ENCODE measurements at regions of chr6 and their contacts with region 1.

Region 1: DNA sequence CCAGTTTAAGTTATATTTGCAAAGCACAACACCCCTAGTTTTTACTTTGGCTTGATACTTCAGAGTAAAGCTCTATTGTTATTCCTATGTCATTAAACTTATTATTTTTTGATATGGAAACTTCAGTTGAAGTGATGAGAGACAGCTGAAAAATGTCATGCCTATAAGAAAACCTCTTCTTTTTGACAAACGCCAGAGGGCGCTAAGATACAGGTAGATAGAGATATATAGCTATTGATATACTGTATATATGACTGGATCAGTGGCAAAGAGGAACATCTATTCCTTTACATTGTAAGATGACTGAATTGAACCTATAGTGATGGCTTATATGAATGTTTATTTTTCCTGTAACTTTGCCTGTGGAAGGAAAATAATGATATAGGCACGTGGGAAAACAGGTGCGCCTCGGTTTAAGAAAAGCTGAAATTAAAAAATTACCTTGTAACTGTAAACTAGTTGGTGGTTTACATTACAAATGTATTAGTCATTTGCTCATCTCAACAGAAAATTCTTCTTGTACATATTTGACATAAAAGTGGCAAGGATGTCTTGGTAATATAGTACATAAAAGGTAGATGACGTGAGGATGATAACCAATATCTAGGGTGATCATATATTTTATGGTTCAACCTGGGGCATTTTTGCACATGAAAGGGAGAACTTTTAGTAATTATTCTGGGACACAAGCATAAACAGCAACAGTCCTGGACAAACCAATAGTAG is 74.1 kb downstream of the LAMA4 start:
- DNase-seq: peak; percentile 71
- H3K4me3 ChIP-seq: no peak overlapping the region
- H3K27ac ChIP-seq: no peak overlapping the region
- H3K4me1 ChIP-seq: peaks cover 11% of the 10 kb centered on the region
- H3K27me3 ChIP-seq: no peaks in the 10 kb centered on the region
- CTCF ChIP-seq: peak; percentile 28 to 46
- POLR2A ChIP-seq: no peak

Region 2: GRCh38 chr6:111552241-111552744 is 628.0 kb before region 1 on chr6:
- CTCF ChIA-PET with region 1: no interaction called
- POLR2A ChIA-PET with region 1: no interaction called
- dilution Hi-C with region 1: no loop called
- intact Hi-C with region 1: no loop called
- DNase-seq: peak; percentile 89
- H3K4me3 ChIP-seq: no peak overlapping the region
- H3K27ac ChIP-seq: peak overlapping the region; percentile 30
- H3K4me1 ChIP-seq: peaks cover 20% of the 10 kb centered on the region
- H3K27me3 ChIP-seq: no peaks in the 10 kb centered on the region
- CTCF ChIP-seq: no peak
- POLR2A ChIP-seq: no peak

Region 3: DNA sequence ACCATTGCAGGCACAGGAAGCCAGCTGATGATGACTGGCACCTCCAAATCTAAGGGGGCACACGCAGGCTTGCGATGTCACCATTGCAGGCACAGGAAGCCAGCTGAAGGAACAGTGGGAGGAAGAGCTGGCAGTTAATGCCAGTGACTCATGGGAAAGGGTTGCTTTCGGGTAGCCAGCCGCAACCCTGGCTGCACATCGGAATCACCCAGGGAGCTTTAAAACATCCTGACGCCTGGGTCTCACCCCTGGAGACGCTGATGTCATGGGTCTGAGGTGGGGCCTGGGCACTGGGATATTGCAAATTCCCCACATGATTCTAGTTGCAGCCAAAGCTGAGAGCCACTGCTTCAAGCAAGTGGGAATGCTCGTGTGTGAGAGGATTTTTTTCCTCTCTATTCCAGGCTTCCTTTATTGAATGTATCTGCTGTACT is 142.5 kb before region 1 on chr6:
- CTCF ChIA-PET with region 1: no interaction called
- POLR2A ChIA-PET with region 1: no interaction called
- dilution Hi-C with region 1: no loop called
- intact Hi-C with region 1: no loop called
- DNase-seq: peak; percentile 91
- H3K4me3 ChIP-seq: no peak overlapping the region
- H3K27ac ChIP-seq: peak overlapping the region; percentile 87
- H3K4me1 ChIP-seq: peaks cover 46% of the 10 kb centered on the region
- H3K27me3 ChIP-seq: no peaks in the 10 kb centered on the region
- CTCF ChIP-seq: no peak
- POLR2A ChIP-seq: no peak

Region 4: GRCh38 chr6:112203577-112204349 is 23.5 kb after region 1 on chr6:
- CTCF ChIA-PET with region 1: interaction called, 12 read pairs
- POLR2A ChIA-PET with region 1: no interaction called
- dilution Hi-C with region 1: no loop called
- intact Hi-C with region 1: no loop called
- DNase-seq: peak; percentile 94
- H3K4me3 ChIP-seq: no peak overlapping the region
- H3K27ac ChIP-seq: peak overlapping the region; percentile 87
- H3K4me1 ChIP-seq: peaks cover 77% of the 10 kb centered on the region
- H3K27me3 ChIP-seq: no peaks in the 10 kb centered on the region
- CTCF ChIP-seq: no peak
- POLR2A ChIP-seq: no peak

Region 5: DNA sequence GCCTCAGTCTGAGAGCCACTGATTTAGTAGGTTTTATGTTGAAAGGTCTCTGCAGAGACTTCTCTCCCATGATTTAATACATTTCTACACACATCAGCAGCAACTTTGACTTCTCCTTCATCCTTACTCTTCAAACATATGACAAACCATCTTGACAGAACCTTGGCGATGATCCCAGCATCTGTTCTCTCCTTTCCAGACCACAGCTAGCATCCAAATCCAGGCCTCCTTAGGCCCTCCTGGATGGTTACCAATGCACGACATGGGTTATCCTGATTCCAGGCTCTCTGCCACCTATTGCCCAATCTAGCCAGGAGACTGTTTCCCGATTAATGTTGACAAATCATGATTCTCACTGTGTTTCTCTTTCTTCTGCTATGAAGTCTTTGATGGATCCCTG is 57.3 kb after region 1 on chr6:
- CTCF ChIA-PET with region 1: interaction called, 36 read pairs
- POLR2A ChIA-PET with region 1: no interaction called
- dilution Hi-C with region 1: no loop called
- intact Hi-C with region 1: no loop called
- DNase-seq: peak; percentile 53
- H3K4me3 ChIP-seq: no peak overlapping the region
- H3K27ac ChIP-seq: peak overlapping the region; percentile 99
- H3K4me1 ChIP-seq: peaks cover 86% of the 10 kb centered on the region
- H3K27me3 ChIP-seq: no peaks in the 10 kb centered on the region
- CTCF ChIP-seq: no peak
- POLR2A ChIP-seq: no peak

Region 6: DNA sequence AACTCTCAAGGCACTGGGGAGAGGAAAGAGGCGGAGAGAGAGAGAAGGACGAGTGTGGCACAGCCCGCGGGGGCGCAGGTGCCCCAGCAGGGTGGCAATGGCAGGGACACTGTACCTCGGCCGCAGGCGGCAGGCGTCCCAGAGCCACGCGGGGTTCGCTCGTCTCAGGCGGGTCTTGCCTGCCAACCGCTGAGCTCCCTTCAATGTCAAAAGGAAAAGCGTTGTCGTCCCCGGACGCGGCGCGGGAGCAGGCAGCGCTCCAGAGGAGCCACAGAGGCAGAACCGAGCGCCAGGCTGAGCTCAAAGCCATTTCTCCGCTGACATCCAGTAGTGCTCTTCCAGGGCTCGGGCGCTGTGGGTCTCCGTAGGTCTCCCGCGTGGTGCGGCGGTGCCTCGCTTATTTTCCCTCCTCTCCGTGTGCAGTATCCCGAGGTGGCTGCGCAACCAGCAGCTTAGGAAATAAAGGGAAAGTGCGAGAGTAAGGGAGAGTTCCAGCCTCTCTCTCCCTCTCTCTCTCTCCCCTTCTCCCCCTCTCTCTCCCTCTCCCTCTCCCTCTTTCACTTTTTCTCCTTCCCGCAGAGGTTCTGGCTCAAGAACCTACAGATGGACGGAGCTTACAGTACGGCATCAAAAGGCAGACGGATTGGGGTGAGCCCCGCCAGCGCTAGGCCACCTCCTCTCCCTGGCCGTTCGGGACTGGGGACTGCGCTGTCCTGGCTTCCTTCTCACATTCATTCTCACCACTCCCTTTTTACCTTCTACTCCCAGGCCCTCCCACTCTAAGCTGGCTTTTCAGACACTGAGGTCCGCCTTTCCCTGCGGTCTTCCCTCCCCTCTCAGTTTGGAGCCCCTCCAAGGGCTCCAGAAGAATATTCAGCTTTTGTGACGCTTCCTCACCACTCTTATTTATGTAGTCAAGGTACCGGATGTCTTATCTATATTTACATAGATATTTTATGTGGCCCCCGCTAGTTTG is 73.9 kb after region 1 on chr6 and contains the start of gene LAMA4:
- CTCF ChIA-PET with region 1: interaction called, 49 read pairs
- POLR2A ChIA-PET with region 1: interaction called, 3 read pairs
- dilution Hi-C with region 1: no loop called
- intact Hi-C with region 1: loop called (anchors 2 kb)
- DNase-seq: peak; percentile 86
- H3K4me3 ChIP-seq: peak within 1 kb of the TSS; percentile 91 to 94 (median 94)
- H3K27ac ChIP-seq: peak within 1 kb of the TSS; percentile 81
- H3K4me1 ChIP-seq: peaks cover 31% of the 10 kb centered on the region
- H3K27me3 ChIP-seq: no peaks in the 10 kb centered on the region
- CTCF ChIP-seq: no peak
- POLR2A ChIP-seq: peak; percentile 98
- total RNA-seq, gene LAMA4: 629 TPM in 2 replicates

Region 7: GRCh38 chr6:112282221-112282620 is 102.0 kb after region 1 on chr6:
- CTCF ChIA-PET with region 1: interaction called, 36 read pairs
- POLR2A ChIA-PET with region 1: no interaction called
- dilution Hi-C with region 1: no loop called
- intact Hi-C with region 1: no loop called
- DNase-seq: peak; percentile 72
- H3K4me3 ChIP-seq: no peak overlapping the region
- H3K27ac ChIP-seq: no peak overlapping the region
- H3K4me1 ChIP-seq: peaks cover 17% of the 10 kb centered on the region
- H3K27me3 ChIP-seq: no peaks in the 10 kb centered on the region
- CTCF ChIP-seq: peak; percentile 19 to 33
- POLR2A ChIP-seq: no peak

Region 8: GRCh38 chr6:112311950-112312547 is 131.8 kb after region 1 on chr6:
- CTCF ChIA-PET with region 1: interaction called, 89 read pairs
- POLR2A ChIA-PET with region 1: no interaction called
- dilution Hi-C with region 1: no loop called
- intact Hi-C with region 1: loop called (anchors 1 kb)
- DNase-seq: peak; percentile 51
- H3K4me3 ChIP-seq: no peak overlapping the region
- H3K27ac ChIP-seq: no peak overlapping the region
- H3K4me1 ChIP-seq: no peaks in the 10 kb centered on the region
- H3K27me3 ChIP-seq: no peaks in the 10 kb centered on the region
- CTCF ChIP-seq: peak; percentile 37 to 43
- POLR2A ChIP-seq: no peak

Region 9: DNA sequence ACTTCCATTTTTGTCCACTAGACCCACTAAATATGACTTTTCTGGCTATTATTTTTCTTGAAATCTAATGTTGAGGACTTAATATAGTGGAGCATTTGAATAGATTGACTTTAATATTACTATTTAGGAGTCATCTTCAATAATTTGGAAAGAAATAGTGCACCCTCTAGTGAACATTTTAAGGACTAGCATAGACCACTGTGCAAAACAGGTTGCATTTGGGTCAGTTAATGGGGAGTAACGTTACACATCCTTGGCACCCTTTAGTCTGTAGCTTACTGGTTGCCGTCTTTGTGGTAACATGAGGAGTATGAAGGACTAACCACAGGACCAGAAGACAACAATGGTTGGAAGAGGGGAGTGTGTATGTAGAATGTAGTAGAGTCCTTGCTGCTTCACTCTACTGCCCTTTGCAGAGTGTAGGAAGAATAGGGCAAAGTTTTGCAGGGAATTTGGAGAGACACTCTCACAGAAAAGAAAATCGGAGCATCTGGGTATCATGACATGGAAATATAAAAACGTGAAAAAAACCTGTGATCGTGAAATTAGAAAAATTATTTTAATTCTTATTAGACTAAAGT is 192.1 kb after region 1 on chr6:
- CTCF ChIA-PET with region 1: interaction called, 14 read pairs
- POLR2A ChIA-PET with region 1: no interaction called
- dilution Hi-C with region 1: no loop called
- intact Hi-C with region 1: loop called (anchors 2 kb)
- DNase-seq: peak; percentile 49
- H3K4me3 ChIP-seq: no peak overlapping the region
- H3K27ac ChIP-seq: no peak overlapping the region
- H3K4me1 ChIP-seq: no peaks in the 10 kb centered on the region
- H3K27me3 ChIP-seq: peaks cover 22 to 23% of the 10 kb centered on the region in 2 experiments
- CTCF ChIP-seq: peak; percentile 32 to 36
- POLR2A ChIP-seq: no peak

Measured in endothelial cell of umbilical vein (primary cell).